Natural killer cell (primary cell): ENCODE measurements at regions of chr7 and their contacts with region 1.

Region 1: GRCh38 chr7:139725077-139725476 is 52.7 kb downstream of the HIPK2 start:
- DNase-seq: no peak
- ATAC-seq: peak; percentile 44 to 73 (median 69)
- H3K4me3 ChIP-seq: no peak overlapping the region
- H3K4me3 Mint-ChIP-seq: no peak overlapping the region
- H3K27ac ChIP-seq: peak overlapping the region; percentile 52
- H3K27ac Mint-ChIP-seq: peak overlapping the region; percentile 59 to 88
- H3K4me1 ChIP-seq: peaks cover 26% of the 10 kb centered on the region
- H3K4me1 Mint-ChIP-seq: peaks cover 50 to 56% of the 10 kb centered on the region in 2 donors
- H3K27me3 ChIP-seq: no peaks in the 10 kb centered on the region
- H3K27me3 Mint-ChIP-seq: no peaks in the 10 kb centered on the region
- CTCF ChIP-seq: no peak

Region 2: DNA sequence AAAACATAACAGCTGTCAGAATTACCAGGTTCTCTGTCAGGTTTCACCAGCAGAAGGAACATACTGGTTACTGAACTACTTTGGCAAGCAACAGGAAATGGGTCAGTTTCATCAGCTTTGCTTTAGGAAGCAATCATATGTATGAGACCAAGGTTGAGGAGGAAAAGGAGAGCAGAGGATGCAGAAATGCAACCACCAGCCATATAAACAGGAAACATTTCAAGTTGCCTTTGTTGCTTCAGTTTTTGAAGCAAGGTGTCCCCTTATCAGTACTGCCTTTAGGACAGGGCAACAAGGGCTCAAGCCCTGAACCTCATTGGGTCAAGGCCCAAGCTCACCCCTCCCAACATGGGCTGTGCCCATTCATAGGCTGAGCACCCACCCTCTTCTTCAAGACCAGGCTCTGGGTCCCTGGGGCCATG is 42.5 kb after region 1 on chr7:
- intact Hi-C with region 1: loop called (anchors 5 kb)
- DNase-seq: peak in 1 of 2 donors; percentile 63
- ATAC-seq: peak; percentile 42 to 69 (median 66)
- H3K4me3 ChIP-seq: no peak overlapping the region
- H3K4me3 Mint-ChIP-seq: peak overlapping the region; percentile 68
- H3K27ac ChIP-seq: peak overlapping the region; percentile 82
- H3K27ac Mint-ChIP-seq: peak overlapping the region; percentile 89 to 96
- H3K4me1 ChIP-seq: peaks cover 29% of the 10 kb centered on the region
- H3K4me1 Mint-ChIP-seq: peaks cover 82 to 87% of the 10 kb centered on the region in 2 donors
- H3K27me3 ChIP-seq: no peaks in the 10 kb centered on the region
- H3K27me3 Mint-ChIP-seq: no peaks in the 10 kb centered on the region
- CTCF ChIP-seq: no peak

Region 3: GRCh38 chr7:139982927-139983920 is 258.1 kb after region 1 on chr7:
- intact Hi-C with region 1: no loop called
- DNase-seq: no peak
- ATAC-seq: no peak
- H3K4me3 ChIP-seq: no peak overlapping the region
- H3K4me3 Mint-ChIP-seq: no peak overlapping the region
- H3K27ac ChIP-seq: no peak overlapping the region
- H3K27ac Mint-ChIP-seq: peak overlapping the region in 1 of 2 donors; percentile 5
- H3K4me1 ChIP-seq: peaks cover 15% of the 10 kb centered on the region
- H3K4me1 Mint-ChIP-seq: peaks cover 13 to 14% of the 10 kb centered on the region in 2 donors
- H3K27me3 ChIP-seq: no peaks in the 10 kb centered on the region
- H3K27me3 Mint-ChIP-seq: no peaks in the 10 kb centered on the region
- CTCF ChIP-seq: no peak